IMR-90 (cell line): ENCODE measurements at regions of chr19 and their contacts with region 1.

Region 1: GRCh38 chr19:48445606-48446481 is at the start of gene GRWD1:
- DNase-seq: peak; percentile 94
- ATAC-seq: peak; percentile 83
- H3K4me3 ChIP-seq: peak within 1 kb of the TSS; percentile 53
- H3K27ac ChIP-seq: peak within 1 kb of the TSS; percentile 77
- H3K4me1 ChIP-seq: peaks cover 8% of the 10 kb centered on the region
- H3K27me3 ChIP-seq: peaks cover 19% of the 10 kb centered on the region
- CTCF ChIP-seq: 0 out of 2 replicates have a peak, but pooled peaks have one; percentile 8
- POLR2A ChIP-seq: peak; percentile 72; the same call in 1 of the 2 replicates
- RAD21 ChIP-seq: no peak; the same call in 1 of the 2 replicates
- total RNA-seq, gene GRWD1: 22.0 and 32.5 TPM in 2 replicates

Region 2: GRCh38 chr19:47675684-47676258 is 770.1 kb before region 1 on chr19:
- CTCF ChIA-PET with region 1: no interaction called
- POLR2A ChIA-PET with region 1: no interaction called
- dilution Hi-C with region 1: no loop called
- in situ Hi-C with region 1: no loop called
- intact Hi-C with region 1: no loop called
- DNase-seq: no peak
- ATAC-seq: no peak
- H3K4me3 ChIP-seq: no peak overlapping the region
- H3K27ac ChIP-seq: no peak overlapping the region
- H3K4me1 ChIP-seq: no peaks in the 10 kb centered on the region
- H3K27me3 ChIP-seq: no peaks in the 10 kb centered on the region
- CTCF ChIP-seq: no peak
- POLR2A ChIP-seq: no peak
- RAD21 ChIP-seq: no peak

Region 3: DNA sequence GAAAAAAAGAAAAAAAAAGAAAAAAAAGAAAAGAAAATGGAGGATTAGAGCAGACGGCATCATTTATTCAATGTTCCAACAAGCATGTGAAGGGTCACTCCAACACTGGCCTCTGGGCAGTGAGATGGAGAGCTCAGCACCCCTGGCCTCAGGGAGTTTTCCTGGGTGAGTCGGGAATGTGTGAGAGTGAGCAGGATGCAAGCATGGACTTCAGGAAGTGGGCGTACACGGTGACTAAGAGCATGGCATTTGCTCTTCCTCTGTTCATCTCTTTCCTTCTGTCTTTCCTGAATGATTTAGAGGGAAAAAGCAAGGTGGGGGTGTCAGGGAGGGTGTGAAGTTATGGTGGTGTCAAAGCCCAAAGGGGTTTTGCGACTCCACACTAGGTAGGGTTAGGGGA is 401.3 kb before region 1 on chr19:
- CTCF ChIA-PET with region 1: no interaction called
- POLR2A ChIA-PET with region 1: no interaction called
- dilution Hi-C with region 1: no loop called
- in situ Hi-C with region 1: no loop called
- intact Hi-C with region 1: no loop called
- DNase-seq: no peak
- ATAC-seq: no peak
- H3K4me3 ChIP-seq: no peak overlapping the region
- H3K27ac ChIP-seq: no peak overlapping the region
- H3K4me1 ChIP-seq: no peaks in the 10 kb centered on the region
- H3K27me3 ChIP-seq: no peaks in the 10 kb centered on the region; the same call in none of the 2 replicates
- CTCF ChIP-seq: no peak
- POLR2A ChIP-seq: no peak
- RAD21 ChIP-seq: no peak

Region 4: GRCh38 chr19:48296963-48297734 is 148.7 kb before region 1 on chr19:
- CTCF ChIA-PET with region 1: no interaction called
- POLR2A ChIA-PET with region 1: no interaction called
- dilution Hi-C with region 1: no loop called
- in situ Hi-C with region 1: no loop called
- intact Hi-C with region 1: no loop called
- DNase-seq: no peak
- ATAC-seq: no peak
- H3K4me3 ChIP-seq: no peak overlapping the region
- H3K27ac ChIP-seq: no peak overlapping the region
- H3K4me1 ChIP-seq: no peaks in the 10 kb centered on the region
- H3K27me3 ChIP-seq: no peaks in the 10 kb centered on the region; the same call in 1 of the 2 replicates
- CTCF ChIP-seq: no peak
- POLR2A ChIP-seq: no peak
- RAD21 ChIP-seq: no peak

Region 5: GRCh38 chr19:48391107-48391986 is 54.5 kb before region 1 on chr19 and contains the start of gene KDELR1:
- CTCF ChIA-PET with region 1: interaction called, 5 read pairs
- POLR2A ChIA-PET with region 1: no interaction called
- dilution Hi-C with region 1: no loop called
- in situ Hi-C with region 1: no loop called
- intact Hi-C with region 1: loop called (anchors 1 kb)
- DNase-seq: peak; percentile 60
- ATAC-seq: peak; percentile 92
- H3K4me3 ChIP-seq: peak within 1 kb of the TSS; percentile 99
- H3K27ac ChIP-seq: peak within 1 kb of the TSS; percentile 99
- H3K4me1 ChIP-seq: peaks cover 7% of the 10 kb centered on the region; the same call in 1 of the 2 replicates
- H3K27me3 ChIP-seq: peaks cover 35% of the 10 kb centered on the region
- CTCF ChIP-seq: peak; percentile 92
- POLR2A ChIP-seq: no peak; the same call in 1 of the 2 replicates
- RAD21 ChIP-seq: peak; percentile 45
- total RNA-seq, gene KDELR1: 57.8 and 58.8 TPM in 2 replicates

Region 6: DNA sequence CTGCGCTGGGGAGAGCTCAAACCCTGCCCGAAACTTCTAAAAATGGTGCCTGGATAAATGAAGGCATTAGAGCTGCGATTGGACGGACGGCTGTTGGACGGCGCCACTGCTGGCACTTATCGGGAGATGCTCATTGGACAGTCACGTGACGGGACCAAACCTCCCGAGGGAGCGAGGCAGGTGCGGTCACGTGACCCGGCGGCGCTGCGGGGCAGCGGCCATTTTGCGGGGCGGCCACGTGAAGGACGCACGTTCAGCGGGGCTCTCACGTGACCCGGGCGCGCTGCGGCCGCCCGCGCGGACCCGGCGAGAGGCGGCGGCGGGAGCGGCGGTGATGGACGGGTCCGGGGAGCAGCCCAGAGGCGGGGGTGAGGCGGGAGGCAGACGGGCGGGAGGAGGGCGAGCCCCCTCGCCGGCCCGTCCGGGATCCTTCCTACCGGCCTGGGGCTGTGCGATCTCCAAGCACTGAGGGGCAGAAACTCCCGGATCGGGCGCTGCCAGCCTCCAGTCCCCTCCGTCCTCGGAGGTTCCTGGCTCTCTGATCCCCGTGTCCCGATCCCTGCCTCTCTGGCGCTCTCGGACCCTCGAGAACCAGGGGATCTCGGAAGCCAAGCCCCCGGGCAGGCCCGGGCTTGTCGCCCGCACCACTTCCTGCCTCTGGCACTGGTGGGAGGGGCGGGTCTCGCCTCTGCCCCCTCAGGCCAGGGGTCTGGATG is 508.9 kb after region 1 on chr19 and contains the start of gene BAX:
- CTCF ChIA-PET with region 1: no interaction called
- POLR2A ChIA-PET with region 1: no interaction called
- dilution Hi-C with region 1: no loop called
- in situ Hi-C with region 1: no loop called
- intact Hi-C with region 1: no loop called
- DNase-seq: peak; percentile 93
- ATAC-seq: peak; percentile 93
- H3K4me3 ChIP-seq: peak within 1 kb of the TSS; percentile 93
- H3K27ac ChIP-seq: peak within 1 kb of the TSS; percentile 97
- H3K4me1 ChIP-seq: peaks cover 8% of the 10 kb centered on the region
- H3K27me3 ChIP-seq: no peaks in the 10 kb centered on the region
- CTCF ChIP-seq: no peak
- POLR2A ChIP-seq: peak; percentile 73; the same call in 1 of the 2 replicates
- RAD21 ChIP-seq: no peak; the same call in 1 of the 2 replicates
- total RNA-seq, gene BAX: 23.3 and 26.1 TPM in 2 replicates